ENCODE measurements at regions of chr5 and their contacts with region 1.

Region 1: GRCh38 chr5:2038321-2039179 is 155.8 kb upstream of the IRX4 start:
- DNase-seq: peak; percentile 11 to 54 (median 36)
- H3K4me3 ChIP-seq: peak overlapping the region in 1 of 3 experiments; percentile 72
- H3K4me3 Mint-ChIP-seq: peak overlapping the region; percentile 63 to 64
- H3K27ac ChIP-seq: no peak overlapping the region
- H3K27ac Mint-ChIP-seq: no peak overlapping the region
- H3K4me1 ChIP-seq: peaks cover 0 to 6% of the 10 kb centered on the region in 2 donors
- H3K4me1 Mint-ChIP-seq: no peaks in the 10 kb centered on the region
- H3K27me3 ChIP-seq: peaks cover 3 to 13% of the 10 kb centered on the region in 2 donors
- H3K27me3 Mint-ChIP-seq: peaks cover 11 to 35% (median 13%) of the 10 kb centered on the region in 3 donors
- CTCF ChIP-seq: peak; percentile 95

Region 2: GRCh38 chr5:1763548-1763911 is 275.0 kb before region 1 on chr5:
- intact Hi-C with region 1: loop called in 1 of 2 experiments (anchors 10 kb)
- DNase-seq: no peak
- H3K4me3 ChIP-seq: no peak overlapping the region
- H3K4me3 Mint-ChIP-seq: peak overlapping the region in 1 of 2 donors; percentile 12
- H3K27ac ChIP-seq: no peak overlapping the region
- H3K27ac Mint-ChIP-seq: no peak overlapping the region
- H3K4me1 ChIP-seq: no peaks in the 10 kb centered on the region
- H3K4me1 Mint-ChIP-seq: no peaks in the 10 kb centered on the region
- H3K27me3 ChIP-seq: no peaks in the 10 kb centered on the region
- H3K27me3 Mint-ChIP-seq: peaks cover 5 to 21% (median 13%) of the 10 kb centered on the region in 3 donors
- CTCF ChIP-seq: no peak